Psoas muscle (tissue), 8 donors: ENCODE measurements at regions of chr6 and their contacts with region 1.

Region 1: GRCh38 chr6:18380158-18380836 is 6.9 kb upstream of the RNF144B start:
- DNase-seq: no peak
- ATAC-seq: peak in 3 of 4 donors; percentile 12 to 42 (median 36)
- H3K4me3 ChIP-seq: peak overlapping the region; percentile 43
- H3K27ac ChIP-seq: peak overlapping the region; percentile 87
- H3K4me1 ChIP-seq: peaks cover 17% of the 10 kb centered on the region
- H3K27me3 ChIP-seq: no peaks in the 10 kb centered on the region
- CTCF ChIP-seq: no peak

Region 2: DNA sequence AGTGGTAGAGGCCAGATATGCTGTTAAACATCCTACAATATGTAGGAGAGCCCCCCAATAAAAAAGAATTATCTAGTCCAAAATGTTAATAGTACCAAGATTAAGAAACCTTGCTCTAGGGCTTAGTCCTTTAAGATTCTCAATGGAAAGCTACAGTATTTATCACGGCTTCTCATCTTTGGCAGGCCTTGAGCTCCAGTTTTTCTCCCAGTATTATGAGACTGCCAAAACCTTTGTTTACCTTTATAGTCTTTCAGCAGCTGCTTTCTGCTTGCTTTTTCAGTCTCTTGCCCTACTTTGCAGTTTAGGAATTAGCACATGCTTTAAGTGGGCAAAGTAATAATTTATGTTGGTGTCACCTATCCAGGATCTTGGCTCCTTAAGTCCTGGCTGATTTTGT is 317.6 kb before region 1 on chr6:
- intact Hi-C with region 1: no loop called
- DNase-seq: no peak
- ATAC-seq: no peak
- H3K4me3 ChIP-seq: no peak overlapping the region
- H3K27ac ChIP-seq: no peak overlapping the region
- H3K4me1 ChIP-seq: peaks cover 4% of the 10 kb centered on the region
- H3K27me3 ChIP-seq: no peaks in the 10 kb centered on the region
- CTCF ChIP-seq: no peak

Region 3: GRCh38 chr6:18343741-18344140 is 36.6 kb before region 1 on chr6:
- intact Hi-C with region 1: loop called (anchors 2 to 5 kb)
- DNase-seq: no peak
- ATAC-seq: peak in 3 of 4 donors; percentile 9 to 16 (median 11)
- H3K4me3 ChIP-seq: no peak overlapping the region
- H3K27ac ChIP-seq: peak overlapping the region; percentile 92
- H3K4me1 ChIP-seq: peaks cover 34% of the 10 kb centered on the region
- H3K27me3 ChIP-seq: no peaks in the 10 kb centered on the region
- CTCF ChIP-seq: no peak